Lower leg skin (tissue), 4 donors: ENCODE measurements at regions of chr19 and their contacts with region 1.

Region 1: DNA sequence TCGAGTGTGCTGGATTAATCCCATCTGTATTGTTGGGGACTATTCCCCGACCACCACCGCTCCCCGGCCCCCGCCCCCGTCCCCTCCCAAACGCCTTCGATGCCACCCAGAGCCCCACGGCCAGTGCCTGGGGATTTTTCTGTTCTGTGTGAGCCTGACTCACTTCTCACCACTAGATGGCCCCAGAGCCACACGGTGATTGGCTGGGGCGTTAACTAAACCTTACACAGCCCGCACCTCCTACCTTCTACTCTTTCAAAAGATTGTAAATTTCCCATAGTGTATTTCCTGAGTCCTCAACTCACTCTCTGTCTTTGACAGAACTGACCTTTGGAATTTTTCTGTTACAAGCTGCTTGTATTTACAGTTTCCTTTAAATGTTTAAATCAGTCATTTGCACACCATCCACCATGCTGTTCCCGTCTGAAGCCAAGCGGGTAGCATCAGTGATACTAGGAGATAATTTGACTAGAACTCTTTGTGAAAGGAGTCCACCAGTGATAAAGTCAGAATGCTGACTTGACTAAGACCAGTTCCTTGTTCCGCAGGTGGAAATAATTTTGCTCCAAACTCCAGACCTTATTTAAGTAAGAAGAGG is 61.4 kb downstream of the RFX2 start:
- DNase-seq: peak; percentile 74 to 95
- H3K4me3 ChIP-seq: no peak overlapping the region
- CTCF ChIP-seq: no peak
- POLR2A ChIP-seq: no peak

Region 2: GRCh38 chr19:5977785-5978605 is 70.9 kb before region 1 on chr19 and contains the start of gene RANBP3:
- intact Hi-C with region 1: no loop called
- DNase-seq: peak; percentile 96 to 99
- H3K4me3 ChIP-seq: peak within 1 kb of the TSS; percentile 94
- CTCF ChIP-seq: no peak
- POLR2A ChIP-seq: no peak
- total RNA-seq, gene RANBP3: 57.2 to 116 (median 72.0) TPM

Region 3: DNA sequence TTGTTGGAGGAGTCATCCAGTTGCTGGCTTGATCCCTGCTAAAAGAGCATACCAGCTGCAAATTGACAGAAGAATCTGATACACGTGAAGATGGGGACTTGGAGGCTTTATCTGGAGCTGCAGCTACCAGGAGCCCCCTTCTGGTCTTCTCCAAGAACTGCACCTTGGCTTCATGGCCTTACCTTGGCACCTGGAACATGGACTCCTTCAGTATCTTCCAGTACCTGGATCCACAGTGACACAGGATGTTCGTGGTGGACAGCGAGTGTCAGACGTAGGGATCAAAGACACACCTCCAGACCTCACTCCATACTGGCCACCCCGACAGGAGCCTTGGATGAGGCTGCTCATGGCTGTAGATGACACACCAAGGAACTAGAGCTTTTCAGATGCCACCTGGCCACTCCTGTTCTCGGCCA is 76.7 kb after region 1 on chr19:
- intact Hi-C with region 1: loop called (anchors 5 kb)
- DNase-seq: peak; percentile 53 to 88
- H3K4me3 ChIP-seq: no peak overlapping the region
- CTCF ChIP-seq: peak in 1 of 3 donors; percentile 94
- POLR2A ChIP-seq: no peak

Region 4: DNA sequence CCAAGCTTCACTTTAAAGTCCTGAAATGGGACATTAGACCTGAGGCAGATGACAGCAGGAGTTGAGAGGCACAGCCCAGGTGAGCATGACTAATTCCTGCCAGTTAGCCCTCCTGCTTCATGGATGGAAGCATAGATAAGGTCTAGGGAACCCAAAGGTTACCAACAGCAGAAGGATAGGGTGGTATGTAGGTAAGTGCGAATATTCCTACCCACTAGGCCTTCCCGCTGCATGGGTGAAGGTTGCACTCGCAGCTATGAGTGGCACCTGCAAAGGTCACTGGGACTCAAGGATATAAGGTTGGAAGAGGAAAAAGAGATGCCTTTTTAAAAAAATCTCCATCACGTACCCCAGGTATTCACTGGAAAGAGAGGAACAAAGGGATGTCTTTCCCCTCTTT is 243.1 kb after region 1 on chr19:
- intact Hi-C with region 1: loop called (anchors 10 kb)
- DNase-seq: no peak
- H3K4me3 ChIP-seq: no peak overlapping the region
- CTCF ChIP-seq: no peak
- POLR2A ChIP-seq: no peak